ENCODE measurements at regions of chr19 and their contacts with region 1.

Region 1: GRCh38 chr19:14198384-14199376 is 7.3 kb downstream of the ADGRL1 start:
- DNase-seq: peak; percentile 40
- H3K4me3 ChIP-seq: no peak overlapping the region
- H3K27ac ChIP-seq: no peak overlapping the region
- H3K4me1 ChIP-seq: peaks cover 14% of the 10 kb centered on the region
- CTCF ChIP-seq: peak; percentile 60

Region 2: DNA sequence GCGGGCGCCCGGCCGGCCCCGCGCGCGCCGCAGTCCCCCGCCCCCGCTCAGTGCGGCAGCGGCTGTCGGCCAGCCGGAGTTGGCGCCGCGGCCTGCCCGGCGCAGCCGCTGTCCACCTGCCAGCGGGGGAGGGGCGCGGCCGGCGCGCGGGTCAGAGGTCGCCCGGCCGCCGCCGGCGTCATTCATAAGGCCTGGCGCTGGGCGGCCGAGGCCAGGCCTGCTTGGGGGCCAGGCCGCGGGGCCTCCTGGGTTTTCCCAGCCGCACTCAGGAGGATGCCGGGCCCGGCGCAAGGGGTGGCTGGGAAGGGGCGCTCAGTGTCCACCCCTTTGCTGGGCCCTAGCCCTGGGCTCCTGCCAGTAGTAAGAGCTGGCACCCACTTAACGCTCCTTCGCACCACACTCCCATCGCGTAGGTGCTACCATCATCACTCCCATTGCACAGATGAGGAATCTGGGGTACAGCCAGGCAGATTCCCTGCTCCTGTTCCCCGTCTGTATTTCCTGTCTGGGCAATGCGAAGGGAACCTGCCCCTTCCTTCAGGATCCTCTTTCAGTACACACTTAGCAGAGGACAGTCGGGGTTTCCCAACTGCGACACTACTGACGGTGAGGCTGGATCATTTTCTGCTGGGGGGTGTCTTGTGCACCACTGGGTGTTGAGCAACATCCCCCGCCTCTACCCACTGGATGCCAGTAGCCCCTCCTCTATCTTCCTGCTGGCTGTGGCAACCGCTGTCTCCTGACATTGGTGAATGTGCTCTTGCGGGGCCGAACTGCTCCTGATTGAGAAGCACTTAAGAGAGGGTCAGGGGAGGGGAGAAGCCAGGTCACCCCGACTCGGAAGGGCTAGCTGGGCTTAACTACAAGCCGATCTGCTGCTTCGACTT is 80.3 kb before region 1 on chr19:
- CTCF ChIA-PET with region 1: no interaction called
- POLR2A ChIA-PET with region 1: no interaction called
- intact Hi-C with region 1: no loop called
- DNase-seq: no peak
- H3K4me3 ChIP-seq: peak overlapping the region; percentile 67
- H3K27ac ChIP-seq: no peak overlapping the region
- H3K4me1 ChIP-seq: peaks cover 31% of the 10 kb centered on the region
- CTCF ChIP-seq: no peak

Region 3: DNA sequence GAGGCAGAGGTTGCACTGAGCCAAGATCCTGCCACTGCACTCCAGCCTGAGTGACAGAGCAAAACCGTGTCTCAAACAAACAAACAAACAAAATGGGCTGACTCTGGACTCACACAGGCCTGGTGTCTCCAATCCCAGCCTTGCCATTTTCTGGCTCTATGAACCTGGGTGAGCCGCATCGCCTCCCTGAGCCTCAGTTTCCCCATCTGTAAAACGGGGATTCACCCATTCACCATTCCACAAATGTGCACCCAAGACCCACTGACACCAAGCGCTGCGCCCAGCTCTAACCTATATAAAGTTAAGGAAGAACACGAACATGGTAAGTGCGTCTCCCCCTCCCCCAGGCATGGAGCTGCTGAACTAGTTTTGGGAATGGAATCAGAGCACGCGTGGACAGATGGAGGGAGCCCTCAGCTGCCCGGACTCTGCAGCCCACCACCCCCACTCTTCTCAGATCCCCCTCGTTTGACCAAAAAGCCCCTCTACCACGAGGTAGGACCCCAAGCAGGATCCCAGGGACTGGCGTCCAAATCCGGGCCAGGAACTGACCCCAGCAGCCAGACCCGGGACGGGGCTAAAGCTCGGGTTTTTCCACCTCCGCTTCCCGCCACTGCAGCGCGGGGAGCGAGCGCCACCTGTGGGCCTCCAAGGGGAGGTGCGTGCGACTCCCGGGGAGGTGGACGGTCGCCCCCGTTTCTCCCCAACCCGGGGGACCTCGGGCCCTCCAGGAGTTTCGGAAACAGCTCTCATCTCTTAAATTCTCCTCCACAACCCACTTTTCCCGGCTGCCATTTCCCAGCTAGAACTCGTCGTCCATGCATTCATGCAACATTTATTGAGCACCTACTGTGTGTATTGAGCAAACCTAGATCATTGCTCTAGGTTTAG is 149.6 kb after region 1 on chr19:
- CTCF ChIA-PET with region 1: interaction called, 3 read pairs
- POLR2A ChIA-PET with region 1: no interaction called
- intact Hi-C with region 1: loop called (anchors 1 kb)
- DNase-seq: peak; percentile 71
- H3K4me3 ChIP-seq: peak overlapping the region; percentile 41
- H3K27ac ChIP-seq: no peak overlapping the region
- H3K4me1 ChIP-seq: peaks cover 20% of the 10 kb centered on the region
- CTCF ChIP-seq: peak; percentile 99

Region 4: GRCh38 chr19:14479975-14480699 is 281.5 kb after region 1 on chr19:
- CTCF ChIA-PET with region 1: no interaction called
- POLR2A ChIA-PET with region 1: no interaction called
- intact Hi-C with region 1: loop called (anchors 10 kb)
- DNase-seq: peak; percentile 65
- H3K4me3 ChIP-seq: no peak overlapping the region
- H3K27ac ChIP-seq: no peak overlapping the region
- H3K4me1 ChIP-seq: no peaks in the 10 kb centered on the region
- CTCF ChIP-seq: peak; percentile 94

Region 5: GRCh38 chr19:14577885-14578427 is 379.3 kb after region 1 on chr19:
- CTCF ChIA-PET with region 1: no interaction called
- POLR2A ChIA-PET with region 1: no interaction called
- intact Hi-C with region 1: no loop called
- DNase-seq: peak; percentile 88
- H3K4me3 ChIP-seq: peak overlapping the region; percentile 42
- H3K27ac ChIP-seq: peak overlapping the region; percentile 92
- H3K4me1 ChIP-seq: peaks cover 79% of the 10 kb centered on the region
- CTCF ChIP-seq: peak; percentile 49

Measured in OCI-LY7 (cell line).